Activated T-helper 1 cell treated with anti-CD3 and anti-CD28 coated beads, Interleukin-12 subunit alpha, Interleukin-12 subunit beta, Interleukin-2, Interleukin-4 antibody, amounts not matched to agents 30 ng/mL and 10 ng/mL and 1 ng/mL, durations not matched to agents 14 hours and 24 hours and 36 hours (primary cell): ENCODE measurements at regions of chr10 and their contacts with region 1.

Region 1: GRCh38 chr10:110918643-110919363 is at the start of gene BBIP1:
- DNase-seq: no peak
- H3K4me3 Mint-ChIP-seq: peak within 1 kb of the TSS; percentile 97
- H3K27ac Mint-ChIP-seq: peak within 1 kb of the TSS; percentile 97
- H3K4me1 Mint-ChIP-seq: peaks cover 47% of the 10 kb centered on the region
- H3K27me3 Mint-ChIP-seq: no peaks in the 10 kb centered on the region
- total RNA-seq, gene BBIP1: 31.0 and 36.3 TPM in 2 replicates

Region 2: GRCh38 chr10:109922976-109923921 is 995.6 kb before region 1 on chr10 and contains the start of gene XPNPEP1:
- intact Hi-C with region 1: loop called (anchors 5 kb)
- DNase-seq: peak; percentile 81
- H3K4me3 Mint-ChIP-seq: peak within 1 kb of the TSS; percentile 94
- H3K27ac Mint-ChIP-seq: peak within 1 kb of the TSS; percentile 92
- H3K4me1 Mint-ChIP-seq: peaks cover 58% of the 10 kb centered on the region
- H3K27me3 Mint-ChIP-seq: peaks cover 5% of the 10 kb centered on the region
- total RNA-seq, gene XPNPEP1: 85.1 and 93.2 TPM in 2 replicates

Region 3: GRCh38 chr10:110210674-110211464 is 707.9 kb before region 1 on chr10:
- intact Hi-C with region 1: loop called (anchors 5 kb)
- DNase-seq: peak; percentile 92
- H3K4me3 Mint-ChIP-seq: peak overlapping the region; percentile 96
- H3K27ac Mint-ChIP-seq: peak overlapping the region; percentile 95
- H3K4me1 Mint-ChIP-seq: peaks cover 70% of the 10 kb centered on the region
- H3K27me3 Mint-ChIP-seq: peaks cover 10% of the 10 kb centered on the region

Region 4: GRCh38 chr10:110497438-110498086 is 421.2 kb before region 1 on chr10 and contains the start of gene DUSP5:
- intact Hi-C with region 1: loop called (anchors 1 kb)
- DNase-seq: peak; percentile 96
- H3K4me3 Mint-ChIP-seq: peak within 1 kb of the TSS; percentile 100
- H3K27ac Mint-ChIP-seq: peak within 1 kb of the TSS; percentile 97
- H3K4me1 Mint-ChIP-seq: peaks cover 62% of the 10 kb centered on the region
- H3K27me3 Mint-ChIP-seq: no peaks in the 10 kb centered on the region
- total RNA-seq, gene DUSP5: 140 and 141 TPM in 2 replicates

Region 5: DNA sequence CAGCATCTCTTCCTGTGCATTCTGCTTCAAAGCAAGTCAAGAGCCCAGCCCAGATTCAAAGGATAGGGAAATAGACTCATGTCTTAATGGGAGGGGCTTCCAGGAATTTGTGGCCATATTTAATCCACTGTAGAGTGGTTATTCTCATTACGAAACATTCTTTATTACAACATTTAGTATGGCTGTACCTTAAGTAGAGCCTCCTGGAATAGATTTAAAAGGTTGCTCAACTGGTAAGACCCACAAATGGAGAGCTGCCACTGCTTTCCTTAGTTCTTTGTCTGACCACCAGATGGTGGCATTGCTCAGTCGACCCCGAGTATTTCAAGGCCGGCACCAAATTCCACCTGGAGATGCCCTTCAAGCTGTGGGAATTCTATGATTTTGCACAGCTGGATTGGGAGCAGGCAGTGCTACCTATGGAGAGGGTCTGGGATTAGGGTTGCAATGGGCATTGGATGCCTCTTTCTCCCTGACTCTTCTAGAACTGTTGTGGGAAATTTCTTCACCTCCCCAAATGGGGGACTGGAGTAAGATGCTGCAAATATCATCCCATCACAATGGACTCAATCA is 172.5 kb before region 1 on chr10:
- intact Hi-C with region 1: loop called (anchors 1 kb)
- DNase-seq: peak; percentile 19
- H3K4me3 Mint-ChIP-seq: no peak overlapping the region
- H3K27ac Mint-ChIP-seq: no peak overlapping the region
- H3K4me1 Mint-ChIP-seq: peaks cover 55% of the 10 kb centered on the region
- H3K27me3 Mint-ChIP-seq: no peaks in the 10 kb centered on the region

Region 6: DNA sequence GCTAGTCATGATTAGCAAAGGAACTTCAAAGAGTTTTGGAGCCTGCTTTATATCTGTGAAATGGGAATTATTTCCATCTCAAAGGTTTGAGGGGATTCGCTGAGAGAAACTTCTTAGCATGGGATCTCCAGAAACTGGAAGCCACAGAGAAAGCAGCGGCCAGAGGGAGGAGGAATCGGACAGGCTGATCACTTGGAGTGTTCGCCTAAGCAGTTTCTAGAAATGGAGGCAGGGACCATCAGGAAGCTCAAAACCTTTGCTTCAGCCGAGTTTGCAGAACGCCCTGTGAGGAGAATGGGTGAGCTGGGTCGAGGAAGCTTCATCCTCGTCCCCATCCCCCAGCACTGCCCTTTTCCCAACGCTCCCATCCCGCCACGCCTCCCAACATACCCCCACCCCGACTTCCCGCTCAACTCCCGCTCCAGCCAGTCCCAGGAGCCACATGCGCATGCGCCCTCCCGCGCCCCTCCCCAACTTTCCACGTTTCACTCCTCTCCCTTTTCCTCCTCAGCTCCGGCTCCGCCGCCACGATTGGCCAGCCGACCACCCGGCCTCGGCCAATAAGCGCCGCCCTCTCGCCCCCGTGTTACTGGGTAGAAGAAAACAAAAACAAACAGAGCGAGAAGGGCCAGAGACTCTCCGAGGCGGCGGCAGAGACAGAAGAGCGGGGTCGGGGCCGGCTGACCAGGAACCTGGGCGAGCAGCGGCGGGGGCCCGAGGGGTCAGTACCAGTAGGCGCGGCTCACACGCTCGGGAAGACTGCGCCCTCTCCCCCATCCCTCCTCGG is 47.3 kb before region 1 on chr10 and contains the start of gene PDCD4:
- intact Hi-C with region 1: loop called (anchors 1 kb)
- DNase-seq: peak; percentile 94
- H3K4me3 Mint-ChIP-seq: peak within 1 kb of the TSS; percentile 96
- H3K27ac Mint-ChIP-seq: peak within 1 kb of the TSS; percentile 98
- H3K4me1 Mint-ChIP-seq: peaks cover 74% of the 10 kb centered on the region
- H3K27me3 Mint-ChIP-seq: no peaks in the 10 kb centered on the region
- total RNA-seq, gene PDCD4: 46.1 and 51.8 TPM in 2 replicates

Region 7: DNA sequence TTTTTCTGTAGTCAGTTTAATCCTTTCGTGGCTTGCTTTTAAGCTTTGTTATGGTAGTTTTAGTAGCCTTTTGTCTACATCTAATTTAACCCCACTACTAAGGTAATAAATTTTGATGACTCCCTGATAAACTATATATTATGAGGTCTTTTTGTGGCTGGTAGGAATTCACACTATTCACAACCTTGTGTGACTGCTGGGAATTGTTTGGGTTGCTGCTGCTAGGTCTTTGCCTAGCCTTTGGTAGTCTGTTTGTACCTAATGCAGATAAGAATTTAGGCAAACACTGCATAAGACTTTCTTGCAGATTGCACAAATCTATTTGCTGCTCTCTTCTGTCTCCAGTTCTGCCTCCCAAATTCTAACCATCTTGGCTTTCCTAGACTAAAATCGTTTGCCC is 58.9 kb after region 1 on chr10:
- intact Hi-C with region 1: no loop called
- DNase-seq: no peak
- H3K4me3 Mint-ChIP-seq: no peak overlapping the region
- H3K27ac Mint-ChIP-seq: no peak overlapping the region
- H3K4me1 Mint-ChIP-seq: peaks cover 29% of the 10 kb centered on the region
- H3K27me3 Mint-ChIP-seq: no peaks in the 10 kb centered on the region

Region 8: DNA sequence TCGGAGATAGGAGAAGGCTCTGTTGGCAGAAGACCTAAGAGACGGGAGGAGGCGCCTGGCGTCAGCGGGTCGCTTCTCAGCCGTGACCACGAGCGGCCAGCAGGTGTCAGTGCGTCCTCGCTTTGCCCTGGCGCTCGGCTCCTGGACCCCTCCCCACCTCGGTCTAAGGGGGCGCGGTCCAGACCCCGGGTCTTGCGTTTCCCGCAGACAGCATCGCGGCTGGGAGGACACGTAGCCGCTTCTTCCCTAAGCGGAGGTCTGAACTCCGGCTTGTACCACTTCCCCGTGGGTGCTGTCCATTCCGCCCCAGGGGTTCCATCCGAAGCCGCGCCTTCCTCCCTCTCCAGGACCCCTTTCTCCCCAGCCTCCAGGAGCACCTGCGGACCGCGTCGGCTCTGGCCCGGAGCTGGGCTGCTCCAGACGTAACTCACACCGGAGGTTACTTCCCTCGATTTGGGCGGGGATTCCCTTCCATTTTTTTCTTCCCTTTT is 157.4 kb after region 1 on chr10:
- intact Hi-C with region 1: loop called (anchors 2 kb)
- DNase-seq: peak; percentile 15
- H3K4me3 Mint-ChIP-seq: peak overlapping the region; percentile 19
- H3K27ac Mint-ChIP-seq: no peak overlapping the region
- H3K4me1 Mint-ChIP-seq: no peaks in the 10 kb centered on the region
- H3K27me3 Mint-ChIP-seq: peaks cover 58% of the 10 kb centered on the region

Region 9: DNA sequence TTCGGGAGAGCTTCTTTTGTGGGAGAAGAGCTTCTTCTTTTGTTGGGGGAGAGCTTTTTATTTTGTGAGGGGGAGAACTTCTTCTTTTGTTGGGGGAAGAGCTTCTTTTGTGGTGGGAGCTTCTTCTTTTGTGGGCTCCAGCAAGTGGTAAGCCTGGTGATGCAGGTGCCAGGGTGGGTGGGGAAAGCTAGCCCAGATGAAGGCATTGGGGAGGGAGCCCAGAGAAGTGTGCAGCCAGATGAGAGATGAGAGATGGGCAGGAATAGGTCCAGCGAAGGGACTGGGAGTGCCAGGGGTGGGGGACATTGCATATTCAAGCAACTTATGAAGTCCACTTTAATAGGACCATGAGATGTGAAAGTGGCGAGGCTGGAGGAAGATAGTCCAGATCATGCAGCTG is 167.8 kb after region 1 on chr10:
- intact Hi-C with region 1: no loop called
- DNase-seq: no peak
- H3K4me3 Mint-ChIP-seq: no peak overlapping the region
- H3K27ac Mint-ChIP-seq: no peak overlapping the region
- H3K4me1 Mint-ChIP-seq: no peaks in the 10 kb centered on the region
- H3K27me3 Mint-ChIP-seq: peaks cover 15% of the 10 kb centered on the region